Activated CD4-positive, alpha-beta memory T cell treated with anti-CD3 and anti-CD28 coated beads, Interleukin-2, amount 10 ng/mL, durations not matched to agents 7 days and 5 days (primary cell): ENCODE measurements at regions of chr19 and their contacts with region 1.

Region 1: GRCh38 chr19:35549174-35549788 is 3.9 kb downstream of the TMEM147 start:
- DNase-seq: peak; percentile 65
- H3K4me3 Mint-ChIP-seq: peak overlapping the region; percentile 8
- H3K27ac Mint-ChIP-seq: no peak overlapping the region
- H3K4me1 Mint-ChIP-seq: peaks cover 28% of the 10 kb centered on the region
- H3K27me3 Mint-ChIP-seq: peaks cover 4% of the 10 kb centered on the region

Region 2: DNA sequence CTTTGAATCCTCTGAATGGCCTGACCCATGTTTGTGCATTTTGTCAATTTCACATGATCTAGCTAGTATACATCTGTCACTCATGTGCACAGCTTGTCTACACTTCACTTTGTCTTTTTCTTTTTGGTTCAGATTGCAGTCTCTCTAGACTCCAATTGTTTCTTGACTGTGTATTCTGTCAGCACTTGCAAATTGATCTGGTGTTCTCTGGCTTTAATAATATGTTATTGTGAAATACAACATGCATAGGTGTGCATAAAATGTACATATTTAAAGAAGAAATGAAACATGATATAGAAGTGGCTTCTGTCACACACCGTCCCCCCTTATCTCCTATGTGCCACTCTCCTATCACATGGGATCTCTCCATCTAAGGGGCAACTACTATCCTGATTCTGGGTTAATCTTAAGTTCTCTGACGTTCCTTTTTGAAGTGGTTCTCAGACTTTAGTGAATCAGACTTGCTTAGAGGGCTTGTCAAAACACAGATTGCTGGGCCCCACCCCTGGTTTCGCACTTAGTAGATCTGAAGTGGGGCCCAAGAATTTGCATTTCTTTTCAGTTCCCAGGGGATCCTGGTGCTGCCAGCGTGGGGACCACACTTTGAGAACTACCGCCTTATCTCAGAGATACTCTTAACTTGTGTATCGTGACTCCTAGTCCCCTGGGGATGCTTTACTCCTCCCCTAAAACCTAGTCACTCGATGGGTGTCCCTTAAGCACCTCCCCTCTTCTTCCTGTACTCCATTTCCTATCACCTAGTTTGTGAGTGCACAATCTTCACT is 64.8 kb before region 1 on chr19:
- CTCF ChIA-PET with region 1: no interaction called
- POLR2A ChIA-PET with region 1: no interaction called
- DNase-seq: no peak
- H3K4me3 Mint-ChIP-seq: no peak overlapping the region
- H3K27ac Mint-ChIP-seq: no peak overlapping the region
- H3K4me1 Mint-ChIP-seq: peaks cover 13% of the 10 kb centered on the region
- H3K27me3 Mint-ChIP-seq: peaks cover 34% of the 10 kb centered on the region

Region 3: DNA sequence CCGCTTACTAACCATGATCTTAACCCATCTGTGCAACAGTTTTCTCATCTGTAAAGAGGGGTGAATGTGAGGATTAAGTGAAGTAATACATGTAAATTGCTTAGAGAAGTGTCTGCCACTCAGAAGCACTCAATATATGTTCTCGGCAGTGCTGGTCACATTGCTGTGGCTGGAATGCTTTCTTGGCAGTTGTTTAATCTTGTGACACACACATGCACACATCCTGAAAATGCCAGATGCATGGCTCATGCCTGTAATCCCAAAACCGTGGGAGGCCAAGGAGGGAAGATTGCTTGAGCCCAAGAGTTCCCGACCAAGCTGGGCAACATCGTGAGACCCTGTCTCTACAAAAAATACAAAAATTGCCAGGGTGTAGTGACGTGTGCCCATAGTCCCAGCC is 31.0 kb before region 1 on chr19:
- CTCF ChIA-PET with region 1: no interaction called
- POLR2A ChIA-PET with region 1: no interaction called
- DNase-seq: no peak
- H3K4me3 Mint-ChIP-seq: no peak overlapping the region
- H3K27ac Mint-ChIP-seq: no peak overlapping the region
- H3K4me1 Mint-ChIP-seq: peaks cover 3% of the 10 kb centered on the region
- H3K27me3 Mint-ChIP-seq: peaks cover 11% of the 10 kb centered on the region

Region 4: GRCh38 chr19:35592226-35592625 is 42.9 kb after region 1 on chr19:
- CTCF ChIA-PET with region 1: interaction called, 12 read pairs
- POLR2A ChIA-PET with region 1: no interaction called
- DNase-seq: no peak
- H3K4me3 Mint-ChIP-seq: no peak overlapping the region
- H3K27ac Mint-ChIP-seq: no peak overlapping the region
- H3K4me1 Mint-ChIP-seq: peaks cover 8% of the 10 kb centered on the region
- H3K27me3 Mint-ChIP-seq: no peaks in the 10 kb centered on the region

Region 5: GRCh38 chr19:35612559-35613321 is 63.5 kb after region 1 on chr19 and contains the start of gene HAUS5:
- CTCF ChIA-PET with region 1: interaction called, 13 read pairs
- POLR2A ChIA-PET with region 1: interaction called, 8 read pairs
- DNase-seq: peak; percentile 97
- H3K4me3 Mint-ChIP-seq: peak within 1 kb of the TSS; percentile 84
- H3K27ac Mint-ChIP-seq: peak within 1 kb of the TSS; percentile 86
- H3K4me1 Mint-ChIP-seq: peaks cover 49% of the 10 kb centered on the region
- H3K27me3 Mint-ChIP-seq: no peaks in the 10 kb centered on the region
- total RNA-seq, gene HAUS5: 45.3 to 46.5 TPM